ENCODE measurements at regions of chr3 and their contacts with region 1.

Region 1: DNA sequence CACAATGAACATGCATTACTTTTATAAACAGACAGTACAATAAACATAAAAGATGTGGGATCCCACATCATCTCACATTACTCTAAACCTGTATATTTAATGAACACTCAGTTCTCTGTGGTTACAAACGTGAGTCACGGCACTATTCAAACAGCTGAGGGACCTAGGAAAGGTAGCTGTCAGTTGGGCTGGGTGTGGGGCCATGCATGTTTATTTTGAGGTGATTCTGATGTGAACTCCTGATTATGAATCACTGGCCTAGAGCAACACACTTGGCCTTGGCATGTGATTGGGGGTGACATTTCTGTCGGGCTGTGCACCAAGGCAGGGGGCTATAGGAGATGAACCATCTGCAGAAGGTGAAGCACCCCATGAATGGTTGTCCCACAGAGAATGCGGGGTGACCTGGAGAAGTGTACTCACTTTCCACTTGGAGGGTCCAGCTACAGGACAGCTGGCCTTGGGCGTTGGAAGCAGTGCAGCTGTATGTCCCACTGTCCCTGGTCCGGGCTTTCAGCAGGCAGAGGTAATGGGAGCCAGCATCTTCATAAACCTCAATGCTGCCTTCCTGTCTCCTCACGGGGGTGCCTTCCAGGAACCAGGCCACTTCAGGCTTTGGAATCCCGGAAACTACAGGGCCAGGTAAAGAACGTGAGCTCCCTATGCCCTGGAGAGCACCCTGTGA is 147.8 kb upstream of the HACD2 start:
- DNase-seq: peak; percentile 97
- H3K4me3 ChIP-seq: no peak overlapping the region
- H3K27ac ChIP-seq: peak overlapping the region; percentile 82
- H3K4me1 ChIP-seq: peaks cover 38% of the 10 kb centered on the region
- H3K27me3 ChIP-seq: no peaks in the 10 kb centered on the region
- CTCF ChIP-seq: no peak

Region 2: GRCh38 chr3:123642182-123642956 is 90.2 kb before region 1 on chr3:
- CTCF ChIA-PET with region 1: no interaction called
- dilution Hi-C with region 1: no loop called
- in situ Hi-C with region 1: no loop called
- intact Hi-C with region 1: no loop called
- DNase-seq: peak; percentile 77
- H3K4me3 ChIP-seq: no peak overlapping the region
- H3K27ac ChIP-seq: no peak overlapping the region
- H3K4me1 ChIP-seq: peaks cover 19% of the 10 kb centered on the region
- H3K27me3 ChIP-seq: no peaks in the 10 kb centered on the region
- CTCF ChIP-seq: peak; percentile 79 to 95

Region 3: DNA sequence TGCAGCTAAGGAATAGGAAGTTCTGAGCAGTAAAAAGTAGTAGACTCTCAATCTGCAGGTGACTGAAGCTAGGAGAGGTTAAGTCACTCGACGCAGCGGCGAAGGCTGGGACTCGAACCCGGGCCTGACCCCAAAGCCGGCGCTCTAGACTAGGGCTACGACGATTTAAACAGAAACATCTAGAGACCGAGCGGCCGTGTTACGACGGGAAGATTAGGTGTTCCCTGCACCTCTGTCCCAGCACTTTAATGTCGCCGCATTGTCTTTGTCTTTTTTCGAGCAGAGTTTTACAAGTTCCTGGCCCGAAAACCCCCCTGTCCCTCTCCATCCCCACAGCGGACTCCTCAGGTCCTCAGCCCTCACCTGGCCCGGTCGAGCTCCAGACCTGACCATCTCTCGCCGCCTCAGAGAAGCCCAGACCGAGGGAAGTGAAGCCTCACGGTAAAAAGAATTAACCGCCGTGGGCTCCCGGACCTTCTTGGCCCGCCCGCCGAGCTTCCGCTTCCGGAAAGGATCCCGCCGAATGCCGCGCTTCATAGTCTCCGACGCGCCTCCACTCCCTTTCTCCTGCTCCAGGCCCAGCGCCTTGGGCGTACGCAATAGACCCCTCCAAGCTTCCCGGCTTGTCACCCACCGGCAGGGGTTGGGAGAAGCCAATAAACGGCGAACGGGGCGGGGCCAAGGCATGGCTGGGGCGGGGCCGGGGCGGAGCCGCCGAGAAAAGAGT is 228.3 kb after region 1 on chr3 and contains the start of gene CCDC14:
- CTCF ChIA-PET with region 1: no interaction called
- dilution Hi-C with region 1: no loop called
- in situ Hi-C with region 1: no loop called
- intact Hi-C with region 1: loop called (anchors 5 kb)
- DNase-seq: peak; percentile 93
- H3K4me3 ChIP-seq: peak within 1 kb of the TSS; percentile 83 to 91 (median 84)
- H3K27ac ChIP-seq: peak within 1 kb of the TSS; percentile 85
- H3K4me1 ChIP-seq: peaks cover 6% of the 10 kb centered on the region
- H3K27me3 ChIP-seq: no peaks in the 10 kb centered on the region
- CTCF ChIP-seq: no peak
- total RNA-seq, gene CCDC14: 34.1 to 39.7 TPM